SK-N-SH (cell line): ENCODE measurements at regions of chr6 and their contacts with region 1.

Region 1: DNA sequence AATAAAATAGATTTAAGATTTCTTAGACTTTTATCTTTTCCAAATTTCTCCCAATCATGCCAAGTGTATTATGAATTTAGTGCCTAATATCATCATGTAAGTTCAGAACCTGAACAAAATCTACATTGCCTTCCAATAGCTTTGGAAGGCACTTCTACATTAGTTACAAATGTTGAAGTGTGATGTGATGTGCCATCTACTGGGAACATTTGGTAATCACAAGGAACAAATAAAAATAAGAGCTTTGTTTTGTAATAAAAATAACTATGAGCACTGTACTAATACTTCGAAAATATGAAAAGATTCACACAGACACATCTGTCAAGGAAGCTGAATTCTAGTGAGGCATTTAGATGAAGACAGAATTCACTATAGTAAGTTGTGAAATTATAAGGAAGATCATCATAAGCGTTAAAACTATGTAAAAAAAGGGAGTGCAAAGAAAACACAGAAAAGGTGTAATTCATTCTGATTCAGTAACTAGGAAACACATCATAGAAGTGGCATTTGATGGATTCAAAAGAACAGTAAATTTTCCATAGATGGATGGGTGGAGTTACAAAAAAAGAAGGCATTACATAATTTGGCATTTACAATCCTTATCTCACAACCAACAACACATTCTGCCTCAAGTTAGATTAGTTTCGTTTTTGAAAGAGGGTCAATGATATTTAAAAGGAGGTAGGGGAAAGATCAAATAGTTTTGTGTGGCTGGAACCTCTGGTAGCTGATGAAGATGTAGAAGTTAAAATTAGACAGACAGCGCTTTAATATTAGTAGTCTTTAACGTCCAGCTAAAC is 161.0 kb downstream of the ASCC3 start:
- DNase-seq: peak; percentile 2
- H3K4me3 ChIP-seq: 0 out of 4 replicates have a peak overlapping the region, but pooled peaks of 1 of the 2 experiments have one; percentile 16
- H3K27ac ChIP-seq: no peak overlapping the region
- H3K4me1 ChIP-seq: no peaks in the 10 kb centered on the region
- H3K27me3 ChIP-seq: no peaks in the 10 kb centered on the region
- CTCF ChIP-seq: peak; percentile 62
- EP300 ChIP-seq: no peak
- RAD21 ChIP-seq: peak; percentile 48; the same call in 1 of the 2 replicates

Region 2: DNA sequence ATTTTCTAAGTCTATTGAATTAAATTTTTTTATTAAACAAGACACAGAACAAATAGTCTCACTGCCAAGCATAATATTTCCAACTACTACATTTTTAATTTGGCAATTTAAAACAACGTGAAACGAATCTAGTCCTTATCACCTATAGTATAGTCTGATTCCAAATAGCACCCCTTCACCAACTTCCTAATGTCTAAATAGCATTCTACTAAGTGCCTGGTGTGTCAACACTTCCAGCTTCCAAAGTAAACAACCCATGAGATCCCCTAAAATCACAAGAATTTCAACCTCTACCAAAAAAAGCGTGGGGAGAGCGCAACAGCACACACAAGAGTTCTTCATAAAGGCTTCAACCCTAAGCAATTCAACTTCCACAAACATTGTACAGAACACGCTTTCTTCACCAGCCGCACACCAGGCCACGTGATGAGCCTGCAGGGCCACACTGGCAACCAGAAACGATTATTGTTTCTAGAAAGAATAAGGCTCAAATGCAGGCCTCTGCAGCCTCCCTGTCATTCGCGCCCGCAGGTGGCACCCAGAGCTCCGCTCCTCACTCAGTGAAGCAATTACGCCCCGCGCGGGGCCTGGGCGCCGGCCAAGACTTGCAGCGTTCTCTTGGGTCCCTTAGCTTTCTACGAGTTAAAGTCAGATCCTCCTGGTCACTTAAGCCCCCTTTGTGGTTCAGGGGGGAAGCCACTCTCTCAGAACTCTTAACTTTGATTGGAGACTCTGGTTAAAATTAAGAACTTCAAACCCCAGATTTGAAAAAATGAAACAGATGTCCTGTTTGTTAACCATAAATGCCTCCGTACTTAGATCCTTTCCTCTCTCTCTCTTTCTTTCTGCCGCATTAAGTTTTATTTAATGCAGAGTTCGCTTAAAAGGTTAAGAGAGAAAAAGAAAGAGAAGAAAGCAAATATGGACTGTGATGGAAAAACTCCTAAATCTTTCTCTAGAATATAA is 273.7 kb before region 1 on chr6:
- CTCF ChIA-PET with region 1: no interaction called
- POLR2A ChIA-PET with region 1: no interaction called
- DNase-seq: no peak
- H3K4me3 ChIP-seq: no peak overlapping the region
- H3K27ac ChIP-seq: no peak overlapping the region
- H3K4me1 ChIP-seq: no peaks in the 10 kb centered on the region; a peak in 1 of 4 replicates
- H3K27me3 ChIP-seq: peaks cover 92% of the 10 kb centered on the region
- CTCF ChIP-seq: no peak
- EP300 ChIP-seq: no peak
- RAD21 ChIP-seq: no peak

Region 3: DNA sequence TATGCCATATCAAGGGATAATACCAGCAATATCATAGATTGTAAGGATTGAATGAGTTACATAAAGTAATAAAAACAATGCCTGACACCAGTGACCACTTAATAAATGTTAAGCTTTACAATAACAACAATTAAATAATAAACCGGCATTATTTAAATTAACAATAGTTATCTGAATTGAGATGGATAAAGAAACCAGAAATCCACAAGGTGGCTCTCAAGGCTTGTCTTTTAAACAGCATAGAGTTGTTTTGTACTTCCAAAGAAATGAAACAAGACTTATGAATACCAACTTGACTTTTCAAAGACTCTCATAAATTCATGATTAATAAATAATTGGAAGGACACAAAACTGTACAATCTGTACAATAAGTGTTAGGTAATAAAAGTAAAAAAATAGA is 42.1 kb before region 1 on chr6:
- CTCF ChIA-PET with region 1: interaction called, 12 read pairs
- POLR2A ChIA-PET with region 1: no interaction called
- DNase-seq: no peak
- H3K4me3 ChIP-seq: no peak overlapping the region
- H3K27ac ChIP-seq: no peak overlapping the region
- H3K4me1 ChIP-seq: no peaks in the 10 kb centered on the region; a peak in 1 of 4 replicates
- H3K27me3 ChIP-seq: no peaks in the 10 kb centered on the region
- CTCF ChIP-seq: peak; percentile 36
- EP300 ChIP-seq: no peak
- RAD21 ChIP-seq: peak; percentile 48

Region 4: GRCh38 chr6:100730001-100730980 is 10.2 kb after region 1 on chr6:
- CTCF ChIA-PET with region 1: interaction called, 16 read pairs
- POLR2A ChIA-PET with region 1: no interaction called
- DNase-seq: no peak
- H3K4me3 ChIP-seq: no peak overlapping the region
- H3K27ac ChIP-seq: no peak overlapping the region
- H3K4me1 ChIP-seq: peaks cover 0 to 13% of the 10 kb centered on the region in 2 experiments; a peak in 2 of 4 replicates
- H3K27me3 ChIP-seq: no peaks in the 10 kb centered on the region
- CTCF ChIP-seq: no peak
- EP300 ChIP-seq: no peak
- RAD21 ChIP-seq: no peak

Region 5: DNA sequence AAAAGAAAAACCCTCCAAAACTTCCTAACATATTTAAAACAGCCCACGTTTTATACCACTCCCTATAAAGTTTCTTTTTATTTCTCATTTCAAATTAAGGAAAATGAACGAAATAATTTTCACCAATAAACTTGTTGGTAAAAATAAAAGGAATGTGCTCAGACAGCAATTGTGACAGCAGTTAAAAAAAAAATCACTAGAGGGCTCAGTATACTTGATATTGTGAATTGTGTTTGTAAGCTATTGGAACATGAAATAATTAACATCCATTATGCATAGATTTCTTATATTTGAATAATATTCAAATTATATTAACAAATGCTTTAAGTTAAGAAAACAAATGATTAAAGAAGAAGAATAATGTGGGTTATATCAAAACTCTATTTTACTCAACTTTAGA is 55.6 kb after region 1 on chr6:
- CTCF ChIA-PET with region 1: no interaction called
- POLR2A ChIA-PET with region 1: no interaction called
- DNase-seq: no peak
- H3K4me3 ChIP-seq: no peak overlapping the region
- H3K27ac ChIP-seq: no peak overlapping the region
- H3K4me1 ChIP-seq: peaks cover 0 to 12% of the 10 kb centered on the region in 2 experiments; a peak in 1 of 4 replicates
- H3K27me3 ChIP-seq: no peaks in the 10 kb centered on the region
- CTCF ChIP-seq: peak; percentile 44
- EP300 ChIP-seq: no peak
- RAD21 ChIP-seq: peak; percentile 57